Transverse colon (tissue), 4 donors: ENCODE measurements at regions of chr6 and their contacts with region 1.

Region 1: DNA sequence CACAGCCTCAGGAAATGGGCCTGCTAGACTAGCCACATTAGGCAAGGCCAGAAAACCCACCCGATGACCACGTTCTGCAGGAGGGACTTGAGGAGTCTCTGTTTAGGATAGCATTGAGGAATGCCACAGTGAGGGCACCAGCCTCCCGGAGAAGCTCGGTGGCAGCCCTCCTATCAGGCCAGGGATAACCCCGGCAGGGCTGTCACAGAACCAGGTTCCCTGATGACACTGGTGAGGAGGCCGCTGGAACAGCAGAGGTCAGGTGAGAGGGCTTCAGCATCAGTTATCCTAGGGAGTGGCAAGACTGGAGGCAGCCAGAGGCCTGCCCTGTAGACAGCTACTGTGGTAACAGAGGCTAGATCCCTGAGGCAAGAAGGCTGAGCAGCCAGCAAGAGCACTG is 157.6 kb downstream of the MYLK4 start:
- DNase-seq: no peak
- H3K4me3 ChIP-seq: no peak overlapping the region
- H3K27ac ChIP-seq: no peak overlapping the region
- H3K4me1 ChIP-seq: no peaks in the 10 kb centered on the region
- H3K27me3 ChIP-seq: no peaks in the 10 kb centered on the region
- CTCF ChIP-seq: no peak
- EP300 ChIP-seq: no peak
- POLR2A ChIP-seq: no peak

Region 2: GRCh38 chr6:2497922-2498623 is 95.1 kb before region 1 on chr6:
- in situ Hi-C with region 1: no loop called
- intact Hi-C with region 1: no loop called
- DNase-seq: no peak
- H3K4me3 ChIP-seq: no peak overlapping the region
- H3K27ac ChIP-seq: no peak overlapping the region
- H3K4me1 ChIP-seq: no peaks in the 10 kb centered on the region
- H3K27me3 ChIP-seq: no peaks in the 10 kb centered on the region
- CTCF ChIP-seq: no peak
- EP300 ChIP-seq: no peak
- POLR2A ChIP-seq: no peak

Region 3: DNA sequence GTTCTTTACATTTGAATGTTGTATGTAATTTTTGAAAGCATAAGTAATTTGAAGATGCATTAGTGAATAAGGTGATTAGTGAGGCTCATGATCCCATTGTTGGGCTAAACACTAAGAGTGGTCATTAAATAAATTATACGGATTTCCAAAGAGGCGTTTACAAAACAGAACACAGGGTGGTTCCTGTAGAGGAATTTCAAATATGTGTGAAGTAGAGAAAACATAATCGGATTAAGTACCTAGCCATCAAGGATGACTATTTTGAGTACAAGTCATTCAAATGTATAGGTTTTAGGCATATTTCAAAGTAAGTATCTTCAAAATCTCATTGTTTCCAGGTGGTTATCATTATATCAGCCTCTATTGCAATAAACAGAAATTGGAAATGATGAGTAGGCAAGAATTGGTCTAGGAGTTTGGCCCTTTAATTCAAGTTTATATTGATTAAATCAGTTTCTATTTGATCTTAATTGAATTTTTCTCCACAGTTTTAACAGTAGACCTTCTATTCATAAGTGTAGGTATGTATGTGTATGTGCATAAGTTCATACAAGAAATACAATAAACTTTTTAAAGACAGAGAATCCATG is 62.8 kb after region 1 on chr6:
- in situ Hi-C with region 1: no loop called
- intact Hi-C with region 1: loop called (anchors 2 kb)
- DNase-seq: no peak
- H3K4me3 ChIP-seq: no peak overlapping the region
- H3K27ac ChIP-seq: no peak overlapping the region
- H3K4me1 ChIP-seq: no peaks in the 10 kb centered on the region
- H3K27me3 ChIP-seq: no peaks in the 10 kb centered on the region
- CTCF ChIP-seq: no peak
- EP300 ChIP-seq: no peak
- POLR2A ChIP-seq: no peak